ENCODE measurements at regions of chr19 and their contacts with region 1.

Region 1: DNA sequence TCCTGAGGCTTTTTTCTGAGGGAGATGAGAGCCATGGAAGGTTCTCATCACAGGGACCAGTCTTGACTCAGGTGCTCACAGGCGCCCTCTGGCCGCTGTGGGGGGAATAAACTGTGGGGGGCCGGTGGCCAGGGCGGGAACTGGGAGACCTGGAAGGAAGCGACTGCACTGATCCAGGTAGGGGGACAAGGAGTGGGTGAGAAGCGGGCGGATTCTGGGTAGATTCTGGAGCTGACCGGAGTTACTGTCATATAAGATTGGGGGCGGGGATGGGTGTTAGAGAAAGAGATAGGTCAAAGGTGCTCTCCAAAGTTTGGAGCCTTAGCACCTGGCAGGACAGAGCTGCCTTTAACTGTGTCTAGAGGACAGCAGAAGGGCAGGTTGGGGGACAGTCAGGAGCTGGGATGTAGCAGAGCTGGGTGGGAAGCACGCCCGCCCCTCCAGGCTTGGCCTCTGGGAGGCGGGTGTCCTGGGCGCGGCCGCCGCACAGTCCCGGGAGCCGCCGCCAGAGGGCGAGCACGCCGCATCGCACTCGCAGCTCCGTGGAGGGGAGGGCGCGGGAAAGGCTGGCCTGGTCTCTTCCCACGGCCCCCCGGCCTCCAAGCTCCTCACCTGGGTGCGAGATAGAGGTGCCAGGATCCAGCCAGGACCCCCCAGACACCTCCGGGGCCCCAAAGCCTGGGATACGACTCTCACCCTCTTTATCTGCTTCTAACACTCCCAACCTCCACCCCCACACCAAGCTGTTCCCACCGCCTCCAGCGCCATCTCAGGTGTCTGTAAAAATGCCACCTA is 4.2 kb upstream of the DAND5 start:
- DNase-seq: peak in 1 of 2 donors; percentile 74
- ATAC-seq: peak; percentile 96 to 97
- H3K4me3 ChIP-seq: peak overlapping the region; percentile 56 to 69 (median 60)
- H3K27ac ChIP-seq: peak overlapping the region; percentile 60 to 72 (median 68)
- H3K4me1 ChIP-seq: peaks cover 0 to 12% of the 10 kb centered on the region in 2 donors
- H3K27me3 ChIP-seq: no peaks in the 10 kb centered on the region
- CTCF ChIP-seq: peak; percentile 92 to 98 (median 95)
- POLR2A ChIP-seq: no peak

Region 2: DNA sequence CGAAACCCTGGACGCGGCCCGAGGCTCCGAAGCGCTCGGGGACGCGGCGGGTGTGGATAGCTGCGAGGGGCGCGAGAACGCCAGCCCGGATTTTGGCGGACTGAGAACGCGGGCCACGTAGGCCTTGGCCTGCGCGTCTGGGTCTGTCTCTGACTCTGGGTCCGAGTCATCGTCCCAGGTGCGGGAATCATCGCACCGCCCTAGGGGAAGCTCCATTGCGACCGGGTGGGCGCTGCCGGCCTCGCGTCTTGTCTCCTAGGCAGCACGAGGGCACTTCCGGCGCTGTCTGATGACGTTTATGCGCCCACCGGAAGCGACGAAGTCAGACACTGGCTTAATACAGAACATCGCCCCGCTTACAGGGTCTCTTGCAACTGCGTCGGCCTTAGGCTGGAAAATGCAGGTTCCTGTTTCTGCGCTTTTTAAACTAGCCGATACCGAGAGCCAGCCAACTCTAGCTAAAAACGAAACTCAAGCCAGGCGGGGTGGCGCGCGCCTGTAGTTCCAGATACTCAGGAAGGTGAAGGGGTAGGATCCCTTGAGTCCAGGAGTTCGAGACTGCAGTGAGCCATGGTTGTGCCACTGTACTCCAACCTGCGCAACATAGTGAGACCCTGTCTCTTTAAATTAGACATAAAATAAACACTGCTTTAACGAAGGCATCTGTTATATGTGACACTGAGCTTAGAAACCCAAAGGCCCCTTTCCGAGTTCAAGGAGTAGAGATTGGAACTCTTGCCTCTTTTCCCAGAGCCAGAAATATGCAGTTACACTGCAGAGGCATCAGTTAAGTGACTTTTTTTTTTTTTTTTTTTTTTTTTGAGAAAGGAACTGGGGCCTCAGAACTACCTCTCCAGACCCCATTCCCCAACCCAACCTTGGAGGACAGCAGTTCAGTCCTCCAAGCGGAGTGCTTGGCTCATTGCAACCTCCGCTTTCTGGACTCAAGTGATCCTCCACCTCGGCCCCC is 268.6 kb before region 1 on chr19 and contains the start of gene FBXW9:
- in situ Hi-C with region 1: no loop called
- intact Hi-C with region 1: no loop called
- DNase-seq: peak; percentile 87 to 95
- ATAC-seq: peak; percentile 96
- H3K4me3 ChIP-seq: peak within 1 kb of the TSS; percentile 78 to 98 (median 95)
- H3K27ac ChIP-seq: peak within 1 kb of the TSS; percentile 76 to 92 (median 86)
- H3K4me1 ChIP-seq: peaks cover 9 to 16% of the 10 kb centered on the region in 2 donors
- H3K27me3 ChIP-seq: no peaks in the 10 kb centered on the region
- CTCF ChIP-seq: no peak
- POLR2A ChIP-seq: peak in 1 of 2 donors; percentile 50
- total RNA-seq, gene FBXW9: 2.5 to 5.8 (median 3.3) TPM

Region 3: GRCh38 chr19:12793290-12794199 is 171.7 kb before region 1 on chr19:
- in situ Hi-C with region 1: no loop called
- intact Hi-C with region 1: no loop called
- DNase-seq: peak; percentile 85 to 92
- ATAC-seq: peak; percentile 48 to 55
- H3K4me3 ChIP-seq: peak overlapping the region; percentile 91 to 98 (median 94)
- H3K27ac ChIP-seq: peak overlapping the region; percentile 99 to 100 (median 100)
- H3K4me1 ChIP-seq: peaks cover 24 to 27% of the 10 kb centered on the region in 2 donors
- H3K27me3 ChIP-seq: no peaks in the 10 kb centered on the region
- CTCF ChIP-seq: peak in 2 of 5 experiments; percentile 19 to 30
- POLR2A ChIP-seq: peak; percentile 82 to 90

Region 4: GRCh38 chr19:12881172-12881808 is 83.9 kb before region 1 on chr19 and contains the start of gene DNASE2:
- in situ Hi-C with region 1: loop called in 1 of 4 experiments (anchors 10 kb)
- intact Hi-C with region 1: loop called (anchors 1 kb)
- DNase-seq: peak; percentile 94 to 99
- ATAC-seq: peak; percentile 90 to 95
- H3K4me3 ChIP-seq: peak within 1 kb of the TSS; percentile 72 to 97 (median 82)
- H3K27ac ChIP-seq: peak within 1 kb of the TSS; percentile 81 to 98 (median 94)
- H3K4me1 ChIP-seq: peaks cover 7 to 30% of the 10 kb centered on the region in 2 donors
- H3K27me3 ChIP-seq: peaks cover 8 to 25% (median 15%) of the 10 kb centered on the region in 3 donors
- CTCF ChIP-seq: no peak
- POLR2A ChIP-seq: peak; percentile 63 to 73
- total RNA-seq, gene DNASE2: 11.9 to 44.3 (median 15.4) TPM

Region 5: GRCh38 chr19:12945479-12946091 is 19.6 kb before region 1 on chr19 and contains the start of gene RAD23A:
- in situ Hi-C with region 1: no loop called
- intact Hi-C with region 1: loop called (anchors 1 kb)
- DNase-seq: peak; percentile 93 to 97
- ATAC-seq: peak; percentile 90 to 92
- H3K4me3 ChIP-seq: peak within 1 kb of the TSS; percentile 65 to 94 (median 85)
- H3K27ac ChIP-seq: peak within 1 kb of the TSS; percentile 96 to 99 (median 98)
- H3K4me1 ChIP-seq: peaks cover 30 to 35% of the 10 kb centered on the region in 2 donors
- H3K27me3 ChIP-seq: no peaks in the 10 kb centered on the region
- CTCF ChIP-seq: peak in 1 of 5 experiments; percentile 30
- POLR2A ChIP-seq: peak; percentile 96 to 97
- total RNA-seq, gene RAD23A: 618 to 949 (median 780) TPM

Region 6: DNA sequence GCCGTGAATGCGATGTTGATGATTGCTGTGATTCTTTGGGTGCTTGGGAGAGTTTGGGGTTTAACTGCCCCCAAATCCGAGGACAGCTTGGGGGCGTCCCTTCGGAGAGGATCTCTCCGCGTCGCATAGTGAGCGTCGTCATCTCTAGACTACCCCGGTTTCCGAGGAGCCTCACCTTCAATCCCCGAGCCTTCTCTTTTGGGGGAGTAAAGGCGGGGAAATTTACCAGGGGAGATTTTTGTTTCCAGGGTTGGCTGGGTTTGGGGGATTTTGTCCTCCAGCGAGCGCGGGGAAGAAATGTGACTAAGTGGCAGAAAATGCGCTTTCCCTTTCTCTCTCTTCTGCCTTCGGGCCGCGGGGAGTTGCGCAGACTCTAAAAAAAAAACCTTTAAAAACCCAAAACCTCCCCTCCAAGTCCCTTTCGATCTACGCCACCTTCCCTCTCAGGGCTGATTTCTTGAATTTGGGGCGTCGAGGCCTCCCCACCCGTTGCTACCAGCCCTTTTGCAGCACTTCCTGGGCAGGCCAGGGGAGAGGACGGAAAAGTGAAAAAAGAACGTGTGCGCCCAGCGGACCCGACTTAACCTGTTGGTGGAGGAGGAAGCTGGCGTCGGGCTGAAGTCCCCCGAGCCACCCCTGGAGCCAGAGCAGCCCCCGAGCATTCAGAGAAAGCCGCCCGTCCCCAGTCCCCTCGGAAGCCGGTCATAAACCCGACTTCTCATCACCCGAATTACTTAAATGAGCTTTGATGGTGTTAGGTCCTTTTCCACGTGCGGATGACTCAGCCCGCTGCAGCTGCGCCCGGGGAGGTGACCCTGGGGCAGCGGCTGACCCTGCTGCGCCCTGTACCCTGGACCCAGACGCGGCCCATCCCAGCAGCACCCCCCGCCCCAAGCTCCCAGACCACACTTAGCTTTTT is 47.7 kb after region 1 on chr19:
- in situ Hi-C with region 1: no loop called
- intact Hi-C with region 1: no loop called
- DNase-seq: peak; percentile 91 to 93
- ATAC-seq: peak; percentile 55 to 74
- H3K4me3 ChIP-seq: peak overlapping the region; percentile 52 to 74 (median 59)
- H3K27ac ChIP-seq: peak overlapping the region; percentile 97 to 100 (median 99)
- H3K4me1 ChIP-seq: peaks cover 71 to 79% of the 10 kb centered on the region in 2 donors
- H3K27me3 ChIP-seq: no peaks in the 10 kb centered on the region
- CTCF ChIP-seq: no peak
- POLR2A ChIP-seq: peak; percentile 92 to 94

Region 7: GRCh38 chr19:13069415-13070359 is 104.5 kb after region 1 on chr19:
- in situ Hi-C with region 1: no loop called
- intact Hi-C with region 1: no loop called
- DNase-seq: peak in 1 of 2 donors; percentile 55
- ATAC-seq: peak; percentile 13 to 40
- H3K4me3 ChIP-seq: peak overlapping the region; percentile 51 to 54 (median 52)
- H3K27ac ChIP-seq: peak overlapping the region; percentile 92 to 100 (median 96)
- H3K4me1 ChIP-seq: peaks cover 67 to 75% of the 10 kb centered on the region in 2 donors
- H3K27me3 ChIP-seq: no peaks in the 10 kb centered on the region
- CTCF ChIP-seq: peak in 1 of 5 experiments; percentile 30
- POLR2A ChIP-seq: no peak

Measured in gastrocnemius medialis (tissue), 4 donors.